ENCODE measurements at regions of chr9 and their contacts with region 1.

Region 1: GRCh38 chr9:130682490-130683121 is 11.0 kb upstream of the EXOSC2 start:
- DNase-seq: peak; percentile 90

Region 2: DNA sequence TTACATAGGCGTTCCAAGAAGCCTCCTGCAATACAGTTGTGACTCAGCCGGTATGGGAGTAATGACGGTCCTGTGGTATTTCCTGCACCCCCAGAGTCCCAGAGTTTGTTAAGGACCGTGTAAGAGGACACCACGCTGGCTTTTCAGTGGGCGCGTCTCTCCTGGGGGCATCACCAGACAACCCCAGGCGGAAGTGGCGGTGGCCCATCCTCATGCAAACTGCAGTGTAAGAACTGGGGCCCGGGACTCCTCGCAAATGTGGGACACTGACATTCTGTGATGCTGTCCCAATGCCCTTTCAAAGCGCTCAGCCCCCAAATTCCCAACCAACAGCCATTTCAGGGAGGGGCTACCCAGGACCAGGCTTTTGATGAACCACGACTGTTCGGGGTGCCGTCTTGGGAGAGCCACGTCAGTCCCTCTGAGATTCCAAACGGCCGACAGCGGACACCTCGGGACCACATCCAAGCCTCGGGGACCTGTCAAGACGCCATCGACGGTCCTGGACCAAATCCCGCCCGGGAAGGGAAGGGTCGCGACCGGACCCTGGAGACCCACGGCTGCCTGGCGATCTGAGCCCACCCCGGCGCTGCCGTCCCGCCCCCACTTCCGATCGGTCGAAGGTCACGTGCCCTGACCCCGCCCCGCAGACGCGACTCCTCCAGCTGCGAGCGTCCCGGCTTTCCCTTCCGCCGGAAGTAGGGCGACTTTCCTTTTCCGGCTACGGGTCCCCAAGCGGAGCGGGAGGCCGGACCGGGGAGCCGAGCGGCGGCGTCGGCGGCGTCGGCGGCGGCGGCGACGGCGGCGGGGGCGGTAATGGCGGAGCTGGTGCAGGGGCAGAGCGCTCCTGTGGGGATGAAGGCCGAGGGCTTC is 103.5 kb before region 1 on chr9 and contains the start of gene FUBP3:
- intact Hi-C with region 1: loop called (anchors 5 kb)
- DNase-seq: peak; percentile 97
- total RNA-seq, gene FUBP3: 36.8 TPM

Region 3: DNA sequence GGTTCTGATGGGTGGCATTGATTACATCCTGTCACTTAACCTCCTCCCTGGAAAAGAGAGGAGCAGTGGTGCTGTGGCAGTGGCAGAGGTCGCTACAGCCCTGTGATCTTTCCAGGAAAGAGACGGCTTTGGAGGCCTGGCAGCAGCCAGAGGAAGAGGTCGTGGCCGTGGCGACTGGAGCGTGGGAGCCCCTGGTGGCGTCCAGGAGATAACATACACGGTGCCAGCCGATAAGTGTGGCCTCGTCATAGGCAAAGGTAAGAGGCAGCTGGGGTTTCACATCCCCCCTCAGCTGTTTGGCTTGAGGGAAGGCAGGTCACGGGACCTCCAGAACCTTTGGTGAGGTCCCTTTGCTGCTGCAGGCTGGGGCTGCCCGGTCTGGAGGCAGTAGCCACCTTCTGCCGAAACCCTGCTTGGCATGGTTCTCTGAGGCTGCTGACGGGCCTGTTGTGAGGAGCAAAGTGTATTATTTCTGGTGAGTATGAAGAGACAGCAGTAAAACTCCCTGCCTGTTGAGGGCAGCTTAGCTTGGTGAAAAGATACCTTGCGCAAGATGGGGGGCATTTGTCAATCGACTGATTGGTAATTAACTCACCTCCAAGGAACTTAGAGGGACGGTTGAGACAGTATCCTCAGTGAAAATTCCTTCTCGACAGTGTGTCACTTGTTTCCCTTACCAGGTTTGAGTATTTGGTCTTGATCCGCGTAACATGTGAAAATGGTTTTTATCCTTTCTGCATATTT is 56.2 kb before region 1 on chr9:
- intact Hi-C with region 1: loop called (anchors 5 kb)
- DNase-seq: no peak